Vagina (tissue), 2 donors: ENCODE measurements at regions of chr22 and their contacts with region 1.

Region 1: GRCh38 chr22:42720263-42721044 is at the start of gene A4GALT:
- DNase-seq: no peak
- H3K4me3 ChIP-seq: peak within 1 kb of the TSS; percentile 83 to 92
- H3K27ac ChIP-seq: peak within 1 kb of the TSS; percentile 96
- H3K4me1 ChIP-seq: peaks cover 53% of the 10 kb centered on the region
- H3K27me3 ChIP-seq: no peaks in the 10 kb centered on the region
- CTCF ChIP-seq: no peak
- POLR2A ChIP-seq: no peak
- total RNA-seq, gene A4GALT: 35.6 TPM

Region 2: DNA sequence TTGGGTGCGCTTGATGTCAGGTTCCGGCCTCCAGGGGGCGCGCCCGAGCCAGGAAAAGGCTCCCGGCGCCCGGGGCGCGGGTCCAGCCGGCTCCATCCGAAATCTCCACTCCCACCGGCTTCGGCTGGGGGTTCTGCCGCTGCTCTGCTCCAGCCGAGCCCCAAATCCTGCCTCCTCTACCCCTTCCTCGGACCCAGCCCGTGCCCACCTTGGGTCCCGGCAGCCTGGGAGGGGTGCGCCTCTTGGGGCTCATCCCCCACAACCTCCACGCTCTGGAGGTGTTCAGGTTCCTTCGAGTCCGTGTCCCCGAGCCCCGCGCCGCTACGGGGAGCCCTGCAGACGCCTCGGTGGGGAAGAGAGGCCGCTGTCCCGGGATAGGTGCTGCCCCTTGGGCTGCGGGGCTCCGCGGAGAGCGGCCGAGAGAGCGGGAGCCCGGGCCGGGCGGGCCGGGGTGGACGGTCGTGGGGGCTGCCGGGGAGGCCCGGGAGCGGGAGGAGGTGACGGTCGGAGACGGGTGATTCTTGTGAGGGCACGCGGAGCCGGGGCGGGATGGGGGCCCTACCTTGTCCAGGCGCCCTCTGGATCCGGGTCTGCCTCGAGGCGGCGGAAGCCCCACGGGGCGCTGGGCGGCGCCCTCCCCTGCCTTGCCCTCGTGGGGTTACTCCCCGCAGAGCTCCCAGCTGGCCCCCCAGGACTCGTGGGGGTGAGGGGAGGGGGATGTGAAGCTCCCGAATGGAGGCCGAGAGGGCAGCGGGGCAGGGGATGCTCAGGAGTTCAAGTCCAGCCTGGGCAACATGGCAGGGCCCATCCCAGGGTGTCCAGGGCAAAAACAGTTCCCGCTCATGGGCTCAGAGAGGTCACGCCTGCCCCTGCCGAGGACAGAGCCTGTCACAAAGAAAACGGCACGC is 58.1 kb before region 1 on chr22:
- intact Hi-C with region 1: loop called (anchors 10 kb)
- DNase-seq: no peak
- H3K4me3 ChIP-seq: peak overlapping the region; percentile 53 to 66
- H3K27ac ChIP-seq: peak overlapping the region; percentile 83
- H3K4me1 ChIP-seq: peaks cover 17% of the 10 kb centered on the region
- H3K27me3 ChIP-seq: no peaks in the 10 kb centered on the region
- CTCF ChIP-seq: peak; percentile 55 to 83 (median 80)
- POLR2A ChIP-seq: no peak

Region 3: GRCh38 chr22:42743501-42743991 is 23.1 kb after region 1 on chr22:
- intact Hi-C with region 1: loop called (anchors 2 kb)
- DNase-seq: peak in 1 of 2 donors; percentile 94
- H3K4me3 ChIP-seq: no peak overlapping the region
- H3K27ac ChIP-seq: peak overlapping the region; percentile 83
- H3K4me1 ChIP-seq: peaks cover 33% of the 10 kb centered on the region
- H3K27me3 ChIP-seq: no peaks in the 10 kb centered on the region
- CTCF ChIP-seq: peak in 1 of 3 experiments; percentile 4
- POLR2A ChIP-seq: no peak

Region 4: GRCh38 chr22:42841444-42841843 is 121.0 kb after region 1 on chr22:
- intact Hi-C with region 1: no loop called
- DNase-seq: no peak
- H3K4me3 ChIP-seq: no peak overlapping the region
- H3K27ac ChIP-seq: no peak overlapping the region
- H3K4me1 ChIP-seq: peaks cover 14% of the 10 kb centered on the region
- H3K27me3 ChIP-seq: no peaks in the 10 kb centered on the region
- CTCF ChIP-seq: no peak
- POLR2A ChIP-seq: no peak

Region 5: DNA sequence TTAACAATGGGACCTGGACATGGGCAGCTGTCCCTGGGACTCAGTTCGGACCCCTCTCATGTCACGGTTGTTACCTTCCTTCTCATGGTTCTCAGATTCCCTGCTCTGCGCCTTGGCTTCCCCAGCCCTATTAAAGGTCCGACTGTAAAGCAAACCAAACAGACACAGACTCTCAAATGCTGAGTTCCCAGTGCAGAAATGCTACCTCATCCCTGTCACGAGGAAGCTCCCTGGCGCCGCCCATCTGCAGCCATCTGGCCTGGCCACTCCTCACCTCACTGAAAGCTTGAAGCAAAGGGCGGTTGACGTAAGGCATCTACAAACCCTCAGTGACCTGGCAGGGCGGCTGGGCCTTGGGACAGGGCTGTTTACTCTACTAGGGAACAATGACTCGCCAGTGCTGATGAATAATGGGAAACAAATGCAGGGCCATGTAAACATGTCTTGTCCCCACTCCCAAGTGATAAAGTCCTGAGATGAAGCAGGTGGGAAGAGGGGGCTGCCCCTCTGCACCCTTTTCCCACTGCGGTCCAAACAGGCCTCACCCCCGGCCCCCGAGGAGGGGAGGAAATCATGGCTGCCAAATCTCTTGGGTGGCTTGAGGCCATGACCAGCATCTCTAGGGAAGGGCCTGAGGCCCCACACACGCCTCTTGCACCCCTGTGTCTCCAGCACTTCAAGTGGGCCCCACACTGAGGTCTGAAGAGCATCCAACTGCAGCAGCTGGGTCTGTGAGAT is 573.4 kb after region 1 on chr22:
- intact Hi-C with region 1: no loop called
- DNase-seq: no peak
- H3K4me3 ChIP-seq: no peak overlapping the region
- H3K27ac ChIP-seq: peak overlapping the region; percentile 26
- H3K4me1 ChIP-seq: peaks cover 71% of the 10 kb centered on the region
- H3K27me3 ChIP-seq: no peaks in the 10 kb centered on the region
- CTCF ChIP-seq: no peak
- POLR2A ChIP-seq: no peak